ENCODE measurements at regions of chr11 and their contacts with region 1.

Region 1: DNA sequence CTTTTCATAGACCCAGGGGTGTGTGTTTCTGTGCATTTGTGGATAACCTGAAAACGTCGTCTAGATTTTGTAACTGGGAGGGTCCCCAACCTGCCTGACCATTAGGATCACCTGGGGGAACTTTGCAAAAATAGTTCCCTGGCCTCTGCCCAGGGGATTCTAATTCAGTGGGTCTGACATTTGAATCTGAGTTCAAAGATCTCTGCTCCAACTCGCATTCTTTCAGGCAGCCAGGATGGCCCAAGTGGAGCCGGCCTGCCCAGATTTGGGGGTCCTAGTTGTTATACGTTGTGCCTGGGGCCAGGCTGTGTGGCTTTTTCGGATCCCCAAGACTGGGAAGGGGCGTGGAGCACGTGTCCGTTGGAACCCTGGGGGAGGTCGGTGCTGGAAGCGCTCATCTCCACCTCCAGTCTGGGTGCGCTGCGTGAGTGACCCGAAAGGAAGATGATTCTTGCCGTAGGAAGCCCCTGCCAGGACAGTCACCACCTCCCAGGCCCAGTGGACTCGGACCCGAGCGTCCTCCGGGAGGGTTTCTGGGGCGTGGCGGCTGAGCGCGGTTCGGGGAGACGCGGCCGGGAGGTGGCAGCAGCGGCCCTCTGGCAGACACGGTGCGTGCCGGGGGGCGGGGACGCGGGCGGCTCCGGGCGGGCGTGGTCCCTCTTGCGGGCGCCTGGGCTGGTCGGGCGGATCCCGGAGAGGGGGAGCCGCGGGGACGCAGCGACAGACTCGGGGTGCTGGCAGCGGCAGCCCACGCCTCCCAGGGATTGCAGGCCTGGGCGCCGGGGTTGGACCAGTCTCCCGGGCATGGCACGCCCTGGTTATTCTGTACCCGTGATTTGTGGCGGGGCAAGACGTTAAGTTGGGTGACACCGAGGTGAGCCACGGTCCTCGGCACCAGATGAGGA is 29.2 kb upstream of the PLET1 start:
- DNase-seq: peak; percentile 92
- ATAC-seq: peak; percentile 92

Region 2: GRCh38 chr11:112024773-112025678 is 264.8 kb before region 1 on chr11 and contains the start of gene DLAT:
- intact Hi-C with region 1: no loop called
- DNase-seq: peak; percentile 94
- ATAC-seq: peak; percentile 94
- total RNA-seq, gene DLAT: 154 TPM

Region 3: GRCh38 chr11:112241486-112241885 is 48.4 kb before region 1 on chr11:
- intact Hi-C with region 1: no loop called
- DNase-seq: no peak
- ATAC-seq: peak; percentile 49

Region 4: DNA sequence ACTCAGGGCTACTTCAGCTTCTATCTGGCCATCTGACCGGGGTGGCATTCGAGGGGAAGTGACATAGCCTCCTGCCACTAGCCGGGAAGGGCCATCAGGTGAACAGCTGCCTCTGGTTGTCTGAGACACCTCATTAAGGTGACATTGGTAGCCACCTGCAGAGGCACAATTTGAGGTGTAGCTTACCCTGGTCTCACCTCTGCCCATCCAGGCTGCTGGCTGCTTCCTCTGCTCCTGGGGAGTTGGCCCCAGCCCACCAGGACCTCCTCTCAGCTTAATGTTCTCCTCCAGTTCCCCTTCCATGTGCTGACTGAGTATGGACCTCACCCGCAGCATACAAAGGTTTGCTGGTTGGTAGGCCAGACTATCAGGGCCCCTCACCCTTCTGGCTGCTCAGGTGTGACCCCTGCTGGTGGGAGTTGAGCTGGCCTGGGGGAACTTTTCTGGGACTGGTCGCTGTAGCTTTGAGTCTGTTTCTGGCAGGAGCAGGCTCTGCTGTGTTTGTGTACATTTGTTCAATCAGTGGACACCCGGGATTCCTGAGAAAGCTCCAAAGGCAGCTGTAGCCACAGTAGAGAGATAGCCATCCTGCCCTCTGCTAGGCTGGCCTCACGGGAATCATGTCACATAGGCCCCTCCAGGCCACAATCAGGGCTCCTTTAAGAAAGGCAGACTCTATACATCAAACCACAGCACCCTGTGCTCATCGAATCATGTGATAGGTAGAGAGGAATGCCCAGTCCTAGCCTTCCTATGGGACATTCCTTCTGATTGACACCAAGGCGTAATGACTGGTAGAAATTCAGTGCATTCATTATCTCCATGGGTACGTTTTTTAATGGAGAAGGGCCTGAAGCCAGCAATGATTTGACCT is 265.9 kb after region 1 on chr11:
- intact Hi-C with region 1: loop called (anchors 5 kb)
- DNase-seq: peak; percentile 65
- ATAC-seq: peak; percentile 86